Ovary (tissue), 10 donors: ENCODE measurements at regions of chr5 and their contacts with region 1.

Region 1: GRCh38 chr5:80686757-80687156 is 32.0 kb upstream of the DHFR start:
- DNase-seq: no peak
- H3K4me3 ChIP-seq: no peak overlapping the region
- H3K27ac ChIP-seq: no peak overlapping the region
- H3K4me1 ChIP-seq: no peaks in the 10 kb centered on the region
- H3K27me3 ChIP-seq: no peaks in the 10 kb centered on the region
- CTCF ChIP-seq: peak in 1 of 3 donors; percentile 8
- EP300 ChIP-seq: no peak
- POLR2A ChIP-seq: no peak

Region 2: GRCh38 chr5:79151942-79152671 is 1534.7 kb before region 1 on chr5:
- intact Hi-C with region 1: no loop called
- DNase-seq: no peak
- H3K4me3 ChIP-seq: no peak overlapping the region
- H3K27ac ChIP-seq: no peak overlapping the region
- H3K4me1 ChIP-seq: peaks cover 2% of the 10 kb centered on the region
- H3K27me3 ChIP-seq: no peaks in the 10 kb centered on the region
- CTCF ChIP-seq: no peak
- EP300 ChIP-seq: no peak
- POLR2A ChIP-seq: no peak

Region 3: DNA sequence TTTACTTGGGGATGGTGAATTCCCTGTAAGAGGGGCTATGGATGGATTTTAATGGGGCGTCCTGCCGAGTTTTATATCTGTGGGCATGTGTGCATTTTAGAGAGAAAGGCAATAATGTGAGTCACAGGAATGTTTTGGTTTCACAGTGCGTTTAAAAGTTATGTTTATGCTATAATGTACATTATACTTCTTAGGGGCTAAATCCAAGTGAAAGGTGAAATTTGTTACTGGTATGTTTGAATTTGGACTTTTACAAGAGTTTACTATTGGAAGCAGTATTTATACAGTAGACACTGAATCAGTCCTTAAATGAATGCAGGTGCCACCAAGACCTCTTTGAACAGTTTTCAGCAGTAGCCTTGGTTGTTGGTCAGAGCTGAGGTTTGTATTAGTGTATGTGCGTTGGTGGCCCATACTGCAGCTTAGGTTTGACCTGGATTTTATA is 1445.2 kb before region 1 on chr5:
- intact Hi-C with region 1: no loop called
- DNase-seq: no peak
- H3K4me3 ChIP-seq: no peak overlapping the region
- H3K27ac ChIP-seq: no peak overlapping the region
- H3K4me1 ChIP-seq: peaks cover 3% of the 10 kb centered on the region
- H3K27me3 ChIP-seq: no peaks in the 10 kb centered on the region
- CTCF ChIP-seq: no peak
- EP300 ChIP-seq: no peak
- POLR2A ChIP-seq: no peak

Region 4: DNA sequence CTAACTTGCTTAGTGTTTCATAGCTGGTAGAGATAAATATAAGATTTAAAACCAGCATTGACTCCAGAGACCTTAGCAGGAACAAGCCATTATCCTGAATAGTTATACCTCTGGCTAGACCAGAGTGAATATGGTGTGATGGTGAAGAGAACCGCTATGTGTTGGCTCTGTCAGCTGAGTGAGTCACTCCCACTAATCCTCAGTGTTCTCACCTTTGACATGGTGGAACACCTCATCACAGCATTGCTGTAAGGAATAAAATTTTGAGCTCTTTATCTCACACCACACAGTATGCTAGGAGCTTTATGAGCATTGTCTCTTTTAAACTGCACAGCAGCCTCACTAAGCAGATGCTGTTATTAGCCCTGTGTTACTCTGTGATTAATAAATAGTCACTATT is 58.7 kb after region 1 on chr5:
- intact Hi-C with region 1: no loop called
- DNase-seq: no peak
- H3K4me3 ChIP-seq: no peak overlapping the region
- H3K27ac ChIP-seq: no peak overlapping the region
- H3K4me1 ChIP-seq: no peaks in the 10 kb centered on the region
- H3K27me3 ChIP-seq: no peaks in the 10 kb centered on the region
- CTCF ChIP-seq: no peak
- EP300 ChIP-seq: no peak
- POLR2A ChIP-seq: no peak

Region 5: DNA sequence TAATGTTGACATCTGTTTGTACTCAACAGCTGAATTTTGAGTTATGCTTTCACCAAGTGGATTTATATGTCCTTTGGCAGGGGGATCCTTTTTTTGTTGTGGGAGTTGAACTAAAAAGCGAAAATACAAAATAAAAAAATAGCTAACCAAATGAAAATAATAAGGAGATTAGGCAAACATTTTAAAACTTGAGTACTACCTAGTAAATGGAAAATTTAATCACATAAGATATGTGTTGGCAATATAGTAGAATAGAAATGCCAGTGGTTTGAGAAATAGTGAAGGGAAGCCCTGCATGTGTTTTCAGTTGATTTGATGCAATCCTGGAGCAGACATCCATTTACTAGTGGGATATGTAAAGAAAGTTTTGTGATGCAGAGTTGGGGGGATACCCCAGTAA is 371.4 kb after region 1 on chr5:
- intact Hi-C with region 1: no loop called
- DNase-seq: no peak
- H3K4me3 ChIP-seq: no peak overlapping the region
- H3K27ac ChIP-seq: no peak overlapping the region
- H3K4me1 ChIP-seq: no peaks in the 10 kb centered on the region
- H3K27me3 ChIP-seq: no peaks in the 10 kb centered on the region
- CTCF ChIP-seq: no peak
- EP300 ChIP-seq: no peak
- POLR2A ChIP-seq: no peak

Region 6: GRCh38 chr5:81165493-81166119 is 478.8 kb after region 1 on chr5:
- intact Hi-C with region 1: loop called in 2 of 4 experiments (anchors 10 kb)
- DNase-seq: peak; percentile 64 to 78 (median 69)
- H3K4me3 ChIP-seq: no peak overlapping the region
- H3K27ac ChIP-seq: no peak overlapping the region
- H3K4me1 ChIP-seq: peaks cover 2% of the 10 kb centered on the region
- H3K27me3 ChIP-seq: no peaks in the 10 kb centered on the region
- CTCF ChIP-seq: peak in 1 of 3 donors; percentile 25
- EP300 ChIP-seq: no peak
- POLR2A ChIP-seq: no peak

Region 7: DNA sequence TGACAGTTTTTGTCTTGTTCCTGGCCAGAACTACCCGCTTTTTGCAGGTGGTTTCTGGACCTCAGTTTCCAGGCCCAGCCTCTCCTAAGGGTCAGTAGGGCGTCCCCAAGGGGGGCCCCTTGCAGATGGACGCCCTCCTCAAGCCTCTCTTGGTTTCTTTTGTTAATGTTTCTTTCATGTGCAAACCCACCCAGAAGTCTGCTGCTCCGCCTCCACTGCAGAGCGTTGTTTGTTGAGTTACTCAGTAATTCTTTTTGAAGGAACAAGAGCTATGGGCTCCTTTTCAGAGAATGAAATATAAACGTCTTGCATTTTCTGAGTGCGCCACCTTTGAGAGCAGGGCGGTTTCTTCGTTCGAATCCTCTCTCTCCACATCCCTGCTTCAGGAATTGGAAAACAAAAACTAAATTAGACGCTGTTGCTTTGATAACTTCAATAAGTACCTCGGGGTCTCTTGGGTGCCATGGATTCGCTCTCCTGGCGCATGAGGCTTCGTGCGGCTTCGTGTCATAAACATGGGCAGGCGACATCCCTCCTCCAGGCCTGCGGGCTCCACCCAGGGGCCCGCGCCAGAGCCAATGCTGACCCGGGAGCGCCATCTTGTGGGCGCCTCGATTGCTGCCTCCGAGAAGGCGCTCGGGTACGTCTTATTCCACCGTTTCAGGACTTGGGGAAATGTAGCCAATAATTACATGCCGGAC is 508.0 kb after region 1 on chr5:
- intact Hi-C with region 1: loop called in 1 of 4 experiments (anchors 5 kb)
- DNase-seq: peak; percentile 77 to 90 (median 85)
- H3K4me3 ChIP-seq: no peak overlapping the region
- H3K27ac ChIP-seq: no peak overlapping the region
- H3K4me1 ChIP-seq: no peaks in the 10 kb centered on the region
- H3K27me3 ChIP-seq: no peaks in the 10 kb centered on the region
- CTCF ChIP-seq: peak; percentile 65 to 91 (median 70)
- EP300 ChIP-seq: no peak
- POLR2A ChIP-seq: no peak